HAP-1 (cell line): ENCODE measurements at regions of chr14 and their contacts with region 1.

Region 1: GRCh38 chr14:36070031-36070719 is 106.3 kb downstream of the PTCSC3 start:
- DNase-seq: peak; percentile 73 to 83
- H3K4me3 ChIP-seq: no peak overlapping the region
- H3K4me1 ChIP-seq: no peaks in the 10 kb centered on the region
- H3K27me3 ChIP-seq: no peaks in the 10 kb centered on the region

Region 2: GRCh38 chr14:34956931-34957330 is 1113.2 kb before region 1 on chr14:
- in situ Hi-C with region 1: no loop called
- DNase-seq: no peak
- H3K4me3 ChIP-seq: no peak overlapping the region
- H3K4me1 ChIP-seq: no peaks in the 10 kb centered on the region
- H3K27me3 ChIP-seq: no peaks in the 10 kb centered on the region

Region 3: DNA sequence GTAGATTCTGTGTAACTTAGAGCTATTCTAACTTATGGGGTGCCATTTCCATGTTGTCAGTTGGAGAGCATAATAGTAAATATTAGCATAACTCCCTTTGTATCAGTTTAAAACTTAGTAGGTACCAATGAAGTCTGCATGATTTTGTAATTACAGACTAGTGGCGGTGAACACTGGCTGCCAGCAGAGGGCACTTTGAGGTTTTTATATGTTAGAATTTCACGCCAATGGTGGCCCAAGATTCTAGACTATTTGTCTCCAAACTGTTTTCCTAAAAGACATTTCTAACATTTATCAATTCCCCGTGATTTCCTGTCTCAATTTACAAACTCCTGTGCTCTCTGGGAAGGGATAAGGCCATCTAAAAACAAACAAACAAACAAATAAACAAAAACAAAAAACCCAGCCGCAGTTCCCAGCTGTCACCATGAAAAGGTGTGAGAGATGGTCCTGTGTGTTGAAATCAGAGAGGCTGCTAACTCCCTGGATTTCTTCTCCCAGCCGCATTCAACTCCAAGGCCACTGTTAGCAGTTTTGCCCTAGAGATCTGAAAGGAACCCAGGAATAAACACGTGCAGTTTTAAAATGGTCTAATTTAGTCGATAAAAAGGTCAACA is 186.4 kb before region 1 on chr14:
- in situ Hi-C with region 1: loop called (anchors 5 kb)
- DNase-seq: peak; percentile 45 to 66
- H3K4me3 ChIP-seq: no peak overlapping the region
- H3K4me1 ChIP-seq: no peaks in the 10 kb centered on the region
- H3K27me3 ChIP-seq: no peaks in the 10 kb centered on the region

Region 4: GRCh38 chr14:36373982-36374673 is 304.0 kb after region 1 on chr14:
- in situ Hi-C with region 1: loop called (anchors 10 kb)
- DNase-seq: peak; percentile 81 to 92
- H3K4me3 ChIP-seq: no peak overlapping the region
- H3K4me1 ChIP-seq: no peaks in the 10 kb centered on the region
- H3K27me3 ChIP-seq: no peaks in the 10 kb centered on the region